GM13976 (cell line): ENCODE measurements at regions of chr5 and their contacts with region 1.

Region 1: GRCh38 chr5:56190497-56190896 is 42.6 kb downstream of the ANKRD55 start:
- DNase-seq: no peak
- CTCF ChIP-seq: no peak

Region 2: GRCh38 chr5:55936100-55936693 is 254.3 kb before region 1 on chr5:
- in situ Hi-C with region 1: loop called (anchors 10 kb)
- DNase-seq: peak; percentile 74
- CTCF ChIP-seq: peak; percentile 87

Region 3: GRCh38 chr5:55994574-55995333 is 195.7 kb before region 1 on chr5 and contains the start of gene IL6ST:
- in situ Hi-C with region 1: loop called (anchors 10 kb)
- DNase-seq: peak; percentile 98
- CTCF ChIP-seq: peak; percentile 5